CD8-positive, alpha-beta memory T cell (primary cell): ENCODE measurements at regions of chr1 and their contacts with region 1.

Region 1: DNA sequence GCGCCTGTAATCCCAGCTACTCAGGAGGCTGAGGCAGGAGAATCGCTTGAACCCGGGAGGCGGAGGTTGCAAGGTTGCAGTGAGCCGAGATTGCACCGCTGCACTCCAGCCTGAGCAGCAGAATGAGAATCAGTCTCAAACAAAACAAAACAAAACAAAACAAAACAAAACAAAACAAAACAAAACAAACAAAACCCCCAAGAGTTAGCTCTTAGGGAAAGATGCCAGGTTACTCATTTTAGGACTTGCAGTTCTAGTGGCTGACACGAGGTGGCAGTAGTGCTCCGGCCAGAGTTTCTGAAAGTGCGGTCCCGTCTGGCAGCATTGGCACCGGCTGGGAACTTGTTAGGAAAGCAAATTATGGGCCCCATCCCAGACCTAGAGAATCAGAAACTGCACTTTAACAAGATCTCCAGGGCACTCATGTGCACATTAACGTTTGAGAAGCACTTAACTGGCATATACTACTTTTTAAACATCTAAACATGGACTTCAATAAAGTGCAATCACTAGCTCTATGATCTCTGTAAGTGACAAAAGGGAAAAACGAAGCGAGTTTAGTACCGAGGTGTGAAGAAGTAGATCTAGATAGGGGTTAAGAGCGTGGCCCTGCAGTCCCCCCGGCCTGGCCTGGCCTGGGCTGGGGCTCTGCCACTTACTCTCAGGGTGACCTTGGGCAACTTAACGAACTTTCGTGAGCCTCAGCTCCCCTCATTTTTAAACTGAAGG is 41.9 kb upstream of the TNFRSF1B start:
- DNase-seq: peak; percentile 68 to 85 (median 72)
- H3K4me3 ChIP-seq: no peak overlapping the region
- H3K4me3 Mint-ChIP-seq: peak overlapping the region in 4 of 7 donors; percentile 27 to 50 (median 40)
- H3K27ac ChIP-seq: no peak overlapping the region
- H3K27ac Mint-ChIP-seq: peak overlapping the region in 5 of 8 donors; percentile 59 to 90 (median 81)
- H3K4me1 ChIP-seq: peaks cover 22% of the 10 kb centered on the region
- H3K4me1 Mint-ChIP-seq: peaks cover 30 to 46% (median 34%) of the 10 kb centered on the region in 3 donors
- H3K27me3 ChIP-seq: no peaks in the 10 kb centered on the region
- H3K27me3 Mint-ChIP-seq: peaks cover 0 to 2% of the 10 kb centered on the region in 2 donors

Region 2: DNA sequence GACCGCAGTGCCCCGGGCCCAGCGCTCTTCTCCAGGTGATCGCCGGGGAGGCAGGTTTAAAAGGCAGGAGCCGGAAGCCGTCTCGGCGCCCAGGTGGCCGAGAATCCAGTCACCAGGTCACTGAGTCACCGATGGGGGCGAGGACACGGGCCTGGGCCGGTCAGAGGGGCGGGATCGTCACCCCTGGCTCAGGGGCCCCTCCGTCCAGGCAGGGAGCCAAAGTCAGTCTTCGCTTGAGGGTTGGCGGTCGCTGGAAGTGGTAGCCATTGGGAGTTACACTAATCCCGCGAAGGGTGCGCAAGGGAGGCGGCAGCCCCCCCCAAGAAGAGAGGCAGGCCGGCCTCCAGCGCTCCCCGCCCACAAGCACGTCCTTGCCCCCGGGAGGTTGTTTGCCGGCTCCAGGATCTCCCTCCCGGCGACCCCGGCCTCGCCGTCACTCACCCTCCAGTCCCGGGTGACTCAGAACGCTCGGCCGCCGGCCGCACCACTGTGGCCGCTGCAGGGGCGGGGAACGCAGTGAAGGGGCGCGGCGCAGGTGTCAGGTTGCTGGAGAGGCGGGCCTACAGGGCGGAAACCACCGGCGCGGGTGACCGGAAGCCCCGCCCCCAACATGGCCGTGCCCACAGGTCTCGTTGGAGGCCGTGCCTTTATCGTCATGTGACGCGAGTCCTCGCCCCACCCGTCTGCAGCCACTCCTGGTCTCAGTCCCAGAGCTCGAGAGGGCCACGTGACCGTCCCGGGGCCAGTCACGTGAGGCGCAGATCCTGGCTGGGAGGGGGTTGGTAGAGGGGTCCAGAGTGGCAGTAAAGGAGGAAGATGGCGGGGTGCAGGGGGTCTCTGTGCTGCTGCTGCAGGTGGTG is 319.2 kb before region 1 on chr1 and contains the starts of genes CLCN6 and MTHFR:
- CTCF ChIA-PET with region 1: no interaction called
- POLR2A ChIA-PET with region 1: no interaction called
- DNase-seq: peak; percentile 97 to 99 (median 98)
- H3K4me3 ChIP-seq: peak within 1 kb of the TSS; percentile 90
- H3K4me3 Mint-ChIP-seq: peak within 1 kb of the TSS; percentile 94 to 100 (median 99)
- H3K27ac ChIP-seq: peak within 1 kb of the TSS; percentile 95
- H3K27ac Mint-ChIP-seq: peak within 1 kb of the TSS; percentile 90 to 100 (median 98)
- H3K4me1 ChIP-seq: peaks cover 52% of the 10 kb centered on the region
- H3K4me1 Mint-ChIP-seq: peaks cover 55 to 74% (median 67%) of the 10 kb centered on the region in 3 donors
- H3K27me3 ChIP-seq: no peaks in the 10 kb centered on the region
- H3K27me3 Mint-ChIP-seq: no peaks in the 10 kb centered on the region
- total RNA-seq, gene CLCN6: 8.9 to 9.3 TPM
- total RNA-seq, gene MTHFR: 13.5 to 16.3 TPM

Region 3: DNA sequence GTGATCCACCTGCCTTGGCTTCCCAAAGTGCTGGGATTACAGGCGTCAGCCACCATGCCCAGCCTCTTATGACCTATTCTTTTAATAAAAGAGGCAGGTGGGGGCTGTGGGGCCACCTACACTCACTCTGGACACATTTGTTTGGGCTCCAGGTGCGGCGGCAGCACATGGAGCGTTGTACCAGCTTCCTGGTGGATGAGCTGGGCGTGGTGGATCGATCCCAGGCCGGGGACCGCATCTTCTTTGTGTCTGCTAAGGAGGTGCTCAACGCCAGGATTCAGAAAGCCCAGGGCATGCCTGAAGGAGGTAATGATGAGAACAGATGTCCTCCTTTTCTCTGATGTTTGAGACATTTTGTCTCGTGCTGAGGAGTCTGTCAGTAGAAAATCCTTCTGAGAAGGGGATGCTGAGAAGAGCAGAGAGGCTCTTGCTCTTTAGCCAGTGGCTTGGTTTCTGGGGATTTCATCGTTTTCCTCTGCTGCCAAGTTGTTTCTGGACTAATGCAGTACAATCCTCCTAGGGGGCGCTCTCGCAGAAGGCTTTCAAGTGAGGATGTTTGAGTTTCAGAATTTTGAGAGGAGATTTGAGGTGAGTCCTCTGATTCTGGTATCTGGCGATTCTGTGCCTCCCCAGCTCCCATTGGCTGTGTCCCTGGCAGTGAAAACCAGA is 123.5 kb before region 1 on chr1:
- CTCF ChIA-PET with region 1: no interaction called
- POLR2A ChIA-PET with region 1: no interaction called
- DNase-seq: peak in 1 of 5 donors; percentile 9
- H3K4me3 ChIP-seq: no peak overlapping the region
- H3K4me3 Mint-ChIP-seq: no peak overlapping the region
- H3K27ac ChIP-seq: no peak overlapping the region
- H3K27ac Mint-ChIP-seq: no peak overlapping the region
- H3K4me1 ChIP-seq: no peaks in the 10 kb centered on the region
- H3K4me1 Mint-ChIP-seq: no peaks in the 10 kb centered on the region
- H3K27me3 ChIP-seq: no peaks in the 10 kb centered on the region
- H3K27me3 Mint-ChIP-seq: no peaks in the 10 kb centered on the region

Region 4: GRCh38 chr1:12104417-12104816 is 20.4 kb before region 1 on chr1:
- CTCF ChIA-PET with region 1: no interaction called
- POLR2A ChIA-PET with region 1: no interaction called
- DNase-seq: no peak
- H3K4me3 ChIP-seq: no peak overlapping the region
- H3K4me3 Mint-ChIP-seq: no peak overlapping the region
- H3K27ac ChIP-seq: no peak overlapping the region
- H3K27ac Mint-ChIP-seq: peak overlapping the region in 2 of 8 donors; percentile 9 to 50
- H3K4me1 ChIP-seq: peaks cover 5% of the 10 kb centered on the region
- H3K4me1 Mint-ChIP-seq: peaks cover 12 to 32% (median 23%) of the 10 kb centered on the region in 3 donors
- H3K27me3 ChIP-seq: no peaks in the 10 kb centered on the region
- H3K27me3 Mint-ChIP-seq: no peaks in the 10 kb centered on the region

Region 5: DNA sequence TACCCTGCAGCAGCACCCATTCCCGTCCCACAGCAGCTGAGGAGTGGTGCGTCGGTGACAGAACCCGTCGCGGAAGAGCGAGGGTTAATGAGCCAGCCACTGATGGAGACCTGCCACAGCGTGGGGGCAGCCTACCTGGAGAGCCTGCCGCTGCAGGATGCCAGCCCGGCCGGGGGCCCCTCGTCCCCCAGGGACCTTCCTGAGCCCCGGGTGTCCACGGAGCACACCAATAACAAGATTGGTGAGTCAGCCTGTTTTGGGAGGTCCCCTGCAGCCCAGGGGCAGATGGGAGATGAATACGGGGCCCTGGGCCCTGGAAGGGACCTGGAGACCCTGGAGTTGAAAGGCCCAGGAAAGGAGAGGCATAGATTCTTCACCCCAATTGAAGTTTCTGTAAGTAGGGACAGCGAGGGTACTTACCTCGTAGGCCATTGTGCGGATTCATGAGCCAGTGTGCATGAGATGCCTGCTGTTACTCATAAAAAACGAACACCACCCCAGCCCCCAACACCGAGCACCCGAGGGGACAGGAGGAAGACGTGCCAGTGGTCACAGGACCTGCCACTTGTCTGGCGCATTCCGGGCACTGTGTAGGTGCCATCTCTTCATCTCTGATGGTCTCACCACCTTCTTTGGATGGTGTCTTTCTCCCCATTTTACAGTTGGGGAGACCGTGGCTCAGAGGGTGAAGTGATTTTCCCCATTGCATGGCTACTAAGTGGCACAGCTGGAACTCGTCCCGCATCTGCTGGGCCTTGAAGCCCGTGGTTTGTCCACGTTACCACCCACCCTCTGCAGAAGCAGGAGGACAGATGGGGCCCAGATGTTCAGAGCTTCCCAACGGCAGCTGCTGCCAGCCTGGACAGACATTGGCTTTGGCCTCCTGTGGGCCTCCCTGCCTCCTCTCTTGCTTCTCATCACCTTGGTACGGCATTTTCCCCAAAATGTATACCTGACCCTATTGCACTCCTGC is 13.6 kb after region 1 on chr1:
- CTCF ChIA-PET with region 1: interaction called, 18 read pairs
- POLR2A ChIA-PET with region 1: interaction called, 7 read pairs
- DNase-seq: no peak
- H3K4me3 ChIP-seq: no peak overlapping the region
- H3K4me3 Mint-ChIP-seq: no peak overlapping the region
- H3K27ac ChIP-seq: no peak overlapping the region
- H3K27ac Mint-ChIP-seq: no peak overlapping the region
- H3K4me1 ChIP-seq: peaks cover 15% of the 10 kb centered on the region
- H3K4me1 Mint-ChIP-seq: peaks cover 8 to 23% (median 17%) of the 10 kb centered on the region in 3 donors
- H3K27me3 ChIP-seq: no peaks in the 10 kb centered on the region
- H3K27me3 Mint-ChIP-seq: no peaks in the 10 kb centered on the region

Region 6: GRCh38 chr1:12152113-12152891 is 27.4 kb after region 1 on chr1:
- CTCF ChIA-PET with region 1: interaction called, 41 read pairs
- POLR2A ChIA-PET with region 1: interaction called, 3 read pairs
- DNase-seq: no peak
- H3K4me3 ChIP-seq: no peak overlapping the region
- H3K4me3 Mint-ChIP-seq: peak overlapping the region; percentile 3 to 82 (median 78)
- H3K27ac ChIP-seq: peak overlapping the region; percentile 6
- H3K27ac Mint-ChIP-seq: peak overlapping the region; percentile 89 to 99 (median 98)
- H3K4me1 ChIP-seq: peaks cover 70% of the 10 kb centered on the region
- H3K4me1 Mint-ChIP-seq: peaks cover 78 to 88% (median 80%) of the 10 kb centered on the region in 3 donors
- H3K27me3 ChIP-seq: no peaks in the 10 kb centered on the region
- H3K27me3 Mint-ChIP-seq: no peaks in the 10 kb centered on the region

Region 7: GRCh38 chr1:12166834-12167492 is 42.1 kb after region 1 on chr1 and contains the start of gene TNFRSF1B:
- CTCF ChIA-PET with region 1: interaction called, 23 read pairs
- POLR2A ChIA-PET with region 1: no interaction called
- DNase-seq: peak; percentile 49 to 78 (median 68)
- H3K4me3 ChIP-seq: peak within 1 kb of the TSS; percentile 91
- H3K4me3 Mint-ChIP-seq: peak within 1 kb of the TSS; percentile 94 to 100 (median 99)
- H3K27ac ChIP-seq: peak within 1 kb of the TSS; percentile 95
- H3K27ac Mint-ChIP-seq: peak within 1 kb of the TSS; percentile 90 to 100 (median 99)
- H3K4me1 ChIP-seq: peaks cover 67% of the 10 kb centered on the region
- H3K4me1 Mint-ChIP-seq: peaks cover 71 to 84% (median 76%) of the 10 kb centered on the region in 3 donors
- H3K27me3 ChIP-seq: no peaks in the 10 kb centered on the region
- H3K27me3 Mint-ChIP-seq: peaks cover 0 to 2% of the 10 kb centered on the region in 2 donors
- total RNA-seq, gene TNFRSF1B: 169 to 174 TPM

Region 8: GRCh38 chr1:12184008-12184681 is 59.3 kb after region 1 on chr1:
- CTCF ChIA-PET with region 1: interaction called, 68 read pairs
- POLR2A ChIA-PET with region 1: interaction called, 3 read pairs
- DNase-seq: no peak
- H3K4me3 ChIP-seq: no peak overlapping the region
- H3K4me3 Mint-ChIP-seq: no peak overlapping the region
- H3K27ac ChIP-seq: peak overlapping the region; percentile 14
- H3K27ac Mint-ChIP-seq: peak overlapping the region; percentile 68 to 99 (median 90)
- H3K4me1 ChIP-seq: peaks cover 51% of the 10 kb centered on the region
- H3K4me1 Mint-ChIP-seq: peaks cover 67 to 93% (median 73%) of the 10 kb centered on the region in 3 donors
- H3K27me3 ChIP-seq: no peaks in the 10 kb centered on the region
- H3K27me3 Mint-ChIP-seq: peaks cover 0 to 3% of the 10 kb centered on the region in 2 donors

Region 9: DNA sequence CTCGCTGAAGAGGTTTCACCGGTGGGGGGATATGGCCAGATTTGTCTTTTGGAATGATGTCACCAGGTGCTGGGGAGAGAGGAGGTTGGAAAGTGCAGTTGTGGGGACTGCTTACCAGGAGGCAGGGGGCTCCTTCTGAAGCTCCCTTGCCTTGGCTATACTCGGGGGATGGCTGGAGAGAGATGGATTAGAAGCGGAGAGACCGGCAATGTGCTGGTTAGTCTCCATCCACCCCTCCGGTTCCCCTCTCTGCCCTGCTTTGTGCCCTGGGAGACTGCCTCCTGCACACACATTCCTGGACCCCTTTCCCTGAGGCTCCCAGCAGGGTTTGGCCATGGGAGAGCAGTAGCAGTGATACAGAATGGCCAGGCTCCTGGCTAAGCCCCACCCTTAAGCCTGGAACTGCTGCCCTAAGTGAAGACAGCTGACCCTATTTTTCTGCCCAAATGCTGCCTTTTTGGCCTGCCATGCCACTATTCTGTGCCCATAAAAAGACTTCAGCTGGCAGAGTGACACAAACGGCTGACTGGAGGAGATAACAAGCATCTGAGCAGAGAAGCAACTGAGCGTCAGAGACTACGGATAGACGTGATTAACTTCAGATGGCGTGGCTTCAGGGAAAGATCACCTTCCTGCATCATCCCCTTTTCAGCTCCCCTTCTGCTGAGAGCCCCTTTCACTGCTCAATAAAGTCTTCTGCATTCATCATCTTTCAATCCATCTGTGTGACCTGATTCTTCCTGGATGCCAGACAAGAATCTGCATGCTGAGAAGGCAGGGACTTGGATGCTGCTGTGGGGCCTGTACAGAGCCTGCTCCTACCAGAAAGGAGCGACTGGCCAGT is 90.5 kb after region 1 on chr1:
- CTCF ChIA-PET with region 1: interaction called, 348 read pairs
- POLR2A ChIA-PET with region 1: interaction called, 6 read pairs
- DNase-seq: no peak
- H3K4me3 ChIP-seq: no peak overlapping the region
- H3K4me3 Mint-ChIP-seq: no peak overlapping the region
- H3K27ac ChIP-seq: no peak overlapping the region
- H3K27ac Mint-ChIP-seq: peak overlapping the region in 1 of 8 donors; percentile 43
- H3K4me1 ChIP-seq: peaks cover 11% of the 10 kb centered on the region
- H3K4me1 Mint-ChIP-seq: peaks cover 16 to 24% (median 20%) of the 10 kb centered on the region in 3 donors
- H3K27me3 ChIP-seq: no peaks in the 10 kb centered on the region
- H3K27me3 Mint-ChIP-seq: peaks cover 0 to 3% of the 10 kb centered on the region in 2 donors

Region 10: GRCh38 chr1:12249181-12249580 is 124.3 kb after region 1 on chr1:
- CTCF ChIA-PET with region 1: interaction called, 12 read pairs
- POLR2A ChIA-PET with region 1: no interaction called
- DNase-seq: no peak
- H3K4me3 ChIP-seq: no peak overlapping the region
- H3K4me3 Mint-ChIP-seq: no peak overlapping the region
- H3K27ac ChIP-seq: no peak overlapping the region
- H3K27ac Mint-ChIP-seq: peak overlapping the region in 1 of 8 donors; percentile 32
- H3K4me1 ChIP-seq: no peaks in the 10 kb centered on the region
- H3K4me1 Mint-ChIP-seq: peaks cover 0 to 6% (median 4%) of the 10 kb centered on the region in 3 donors
- H3K27me3 ChIP-seq: no peaks in the 10 kb centered on the region
- H3K27me3 Mint-ChIP-seq: no peaks in the 10 kb centered on the region

Region 11: DNA sequence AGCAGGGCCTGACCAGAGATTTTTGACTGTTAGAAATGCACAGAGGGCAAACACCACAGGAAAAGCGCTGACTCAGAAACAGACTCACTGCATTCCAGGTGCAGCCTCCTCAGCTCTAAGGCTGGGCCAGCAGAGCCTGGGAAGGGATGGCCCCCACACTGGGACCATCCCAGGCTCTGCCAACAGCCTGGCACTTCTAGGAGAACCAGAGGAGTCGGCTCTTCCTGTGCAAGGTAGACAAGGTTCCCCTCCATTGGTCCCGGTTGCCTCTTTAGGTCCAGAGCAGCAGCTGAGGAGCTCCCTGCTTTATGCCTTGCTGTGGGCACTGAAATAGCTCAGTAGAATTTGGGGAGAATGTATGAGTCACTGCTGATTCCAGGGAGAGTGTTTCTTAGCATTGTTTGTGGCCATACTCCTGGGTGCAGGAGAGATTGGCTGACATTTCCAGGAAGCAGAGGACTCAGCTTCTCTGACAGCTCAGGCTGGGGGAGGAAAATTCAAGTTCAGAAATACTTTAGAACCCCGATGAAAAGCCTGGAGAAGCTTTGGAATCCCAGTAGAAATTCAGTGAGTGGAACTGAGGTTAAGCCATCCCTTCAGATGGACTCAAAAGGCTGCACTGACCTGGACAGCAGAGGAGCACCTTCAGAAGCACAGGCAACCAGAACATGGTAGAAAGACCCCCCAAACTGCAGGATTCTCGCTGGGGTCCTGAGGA is 686.0 kb after region 1 on chr1:
- CTCF ChIA-PET with region 1: no interaction called
- POLR2A ChIA-PET with region 1: no interaction called
- DNase-seq: no peak
- H3K4me3 ChIP-seq: no peak overlapping the region
- H3K4me3 Mint-ChIP-seq: no peak overlapping the region
- H3K27ac ChIP-seq: peak overlapping the region; percentile 24
- H3K27ac Mint-ChIP-seq: no peak overlapping the region
- H3K4me1 ChIP-seq: no peaks in the 10 kb centered on the region
- H3K4me1 Mint-ChIP-seq: no peaks in the 10 kb centered on the region
- H3K27me3 ChIP-seq: no peaks in the 10 kb centered on the region
- H3K27me3 Mint-ChIP-seq: peaks cover 21 to 42% of the 10 kb centered on the region in 2 donors